ENCODE measurements at regions of chr7 and their contacts with region 1.

Region 1: GRCh38 chr7:120554960-120555571 is 282.1 kb downstream of the KCND2 start:
- DNase-seq: peak; percentile 66
- H3K4me3 Mint-ChIP-seq: no peak overlapping the region
- H3K27ac Mint-ChIP-seq: no peak overlapping the region
- H3K4me1 Mint-ChIP-seq: no peaks in the 10 kb centered on the region
- H3K27me3 Mint-ChIP-seq: no peaks in the 10 kb centered on the region
- CTCF ChIP-seq: no peak

Region 2: DNA sequence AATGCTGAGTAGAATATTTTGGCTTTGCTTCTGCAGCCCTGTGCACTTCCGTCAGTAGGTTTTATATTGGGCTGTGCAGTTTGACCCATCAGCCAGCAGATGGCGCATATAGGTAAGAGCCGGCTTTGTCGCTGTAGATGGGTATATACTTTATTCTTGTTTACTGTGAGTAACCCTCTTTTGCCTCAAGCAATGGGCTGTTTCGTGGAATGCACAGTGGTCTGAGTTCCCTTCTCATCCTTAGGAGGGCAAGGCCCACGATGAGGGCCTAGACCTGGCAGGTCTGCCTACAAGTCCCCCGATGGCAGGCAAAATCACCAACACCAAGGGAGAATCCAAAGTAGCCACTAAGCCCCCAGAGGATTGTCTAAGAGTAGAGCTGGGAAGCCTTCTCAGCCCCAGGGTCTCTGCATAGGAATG is 1285.0 kb before region 1 on chr7:
- CTCF ChIA-PET with region 1: no interaction called
- intact Hi-C with region 1: loop called (anchors 2 kb)
- DNase-seq: peak; percentile 58
- H3K4me3 Mint-ChIP-seq: no peak overlapping the region
- H3K27ac Mint-ChIP-seq: no peak overlapping the region
- H3K4me1 Mint-ChIP-seq: peaks cover 14% of the 10 kb centered on the region
- H3K27me3 Mint-ChIP-seq: no peaks in the 10 kb centered on the region
- CTCF ChIP-seq: peak; percentile 64

Region 3: DNA sequence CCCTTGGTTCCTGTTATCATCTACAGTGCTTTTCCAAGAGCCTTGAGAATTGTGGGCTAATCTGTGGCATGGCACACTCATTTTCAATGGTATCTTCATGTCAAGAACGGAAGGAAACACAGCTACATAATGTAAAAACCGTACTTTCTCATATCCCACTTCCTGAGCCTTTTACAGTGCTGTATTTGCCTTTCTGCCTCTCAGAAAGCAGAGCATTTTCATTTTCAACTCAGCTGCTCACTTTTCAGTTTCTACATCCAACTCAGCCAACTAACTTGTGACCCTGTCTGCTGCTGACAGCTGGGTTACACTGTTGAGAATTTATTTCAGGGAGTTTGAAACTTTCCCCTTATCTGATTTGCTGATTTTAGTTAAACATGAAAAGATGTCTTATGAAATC is 1157.9 kb before region 1 on chr7:
- CTCF ChIA-PET with region 1: no interaction called
- intact Hi-C with region 1: loop called (anchors 10 kb)
- DNase-seq: no peak
- H3K4me3 Mint-ChIP-seq: no peak overlapping the region
- H3K27ac Mint-ChIP-seq: no peak overlapping the region
- H3K4me1 Mint-ChIP-seq: no peaks in the 10 kb centered on the region
- H3K27me3 Mint-ChIP-seq: no peaks in the 10 kb centered on the region
- CTCF ChIP-seq: no peak

Region 4: DNA sequence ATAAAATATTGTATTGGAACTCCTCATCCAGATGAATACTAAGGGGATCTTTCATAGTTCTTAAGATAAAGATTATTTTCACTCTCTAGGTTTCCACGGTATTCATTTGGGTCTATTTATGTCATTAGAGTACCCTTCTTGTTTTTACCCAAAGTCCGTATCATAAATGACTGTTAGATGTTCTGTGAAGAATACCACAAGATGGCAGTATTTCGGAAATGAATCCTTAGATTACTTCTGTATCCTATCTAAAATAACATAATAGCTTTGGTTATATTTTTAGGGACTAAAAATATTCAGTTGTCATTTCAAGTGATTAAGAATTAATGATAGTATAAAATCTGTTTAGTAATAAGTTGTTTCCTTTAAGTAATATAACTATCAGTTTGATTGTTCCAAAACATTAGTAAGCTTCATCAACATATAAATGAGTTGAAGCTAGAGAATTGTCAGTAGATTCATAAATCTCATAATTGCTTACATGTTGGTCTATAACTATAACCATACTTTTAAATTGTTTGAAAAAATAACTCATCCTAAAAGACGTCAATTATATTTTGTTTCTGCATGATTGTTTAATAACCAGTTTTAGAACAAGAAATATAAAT is 619.5 kb before region 1 on chr7:
- CTCF ChIA-PET with region 1: no interaction called
- intact Hi-C with region 1: loop called (anchors 2 kb)
- DNase-seq: no peak
- H3K4me3 Mint-ChIP-seq: no peak overlapping the region
- H3K27ac Mint-ChIP-seq: no peak overlapping the region
- H3K4me1 Mint-ChIP-seq: no peaks in the 10 kb centered on the region
- H3K27me3 Mint-ChIP-seq: no peaks in the 10 kb centered on the region
- CTCF ChIP-seq: peak; percentile 26

Region 5: DNA sequence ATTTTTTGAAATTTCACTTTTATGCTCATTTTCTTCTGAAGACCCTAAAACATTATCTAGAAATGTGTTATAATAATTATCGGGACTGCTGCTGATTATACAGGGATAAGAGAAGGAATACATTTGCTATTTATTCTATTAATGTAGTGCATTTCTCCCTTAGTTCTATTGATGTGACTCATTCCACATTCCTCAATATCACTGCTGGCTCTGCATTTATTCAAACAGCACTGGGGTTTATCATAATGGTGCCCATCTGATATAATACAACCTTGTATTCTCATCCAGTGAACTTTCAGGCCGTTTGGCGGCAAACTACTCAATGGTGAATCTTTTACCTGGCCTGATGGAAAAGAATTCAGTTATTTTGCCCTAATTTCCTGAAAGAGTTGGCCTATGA is 274.3 kb before region 1 on chr7:
- CTCF ChIA-PET with region 1: no interaction called
- intact Hi-C with region 1: loop called (anchors 2 kb)
- DNase-seq: no peak
- H3K4me3 Mint-ChIP-seq: no peak overlapping the region
- H3K27ac Mint-ChIP-seq: no peak overlapping the region
- H3K4me1 Mint-ChIP-seq: peaks cover 8% of the 10 kb centered on the region
- H3K27me3 Mint-ChIP-seq: no peaks in the 10 kb centered on the region
- CTCF ChIP-seq: no peak

Region 6: GRCh38 chr7:120475994-120476393 is 79.1 kb before region 1 on chr7:
- CTCF ChIA-PET with region 1: no interaction called
- intact Hi-C with region 1: no loop called
- DNase-seq: no peak
- H3K4me3 Mint-ChIP-seq: no peak overlapping the region
- H3K27ac Mint-ChIP-seq: no peak overlapping the region
- H3K4me1 Mint-ChIP-seq: no peaks in the 10 kb centered on the region
- H3K27me3 Mint-ChIP-seq: no peaks in the 10 kb centered on the region
- CTCF ChIP-seq: no peak